MCF 10A (cell line): ENCODE measurements at regions of chr5 and their contacts with region 1.

Region 1: DNA sequence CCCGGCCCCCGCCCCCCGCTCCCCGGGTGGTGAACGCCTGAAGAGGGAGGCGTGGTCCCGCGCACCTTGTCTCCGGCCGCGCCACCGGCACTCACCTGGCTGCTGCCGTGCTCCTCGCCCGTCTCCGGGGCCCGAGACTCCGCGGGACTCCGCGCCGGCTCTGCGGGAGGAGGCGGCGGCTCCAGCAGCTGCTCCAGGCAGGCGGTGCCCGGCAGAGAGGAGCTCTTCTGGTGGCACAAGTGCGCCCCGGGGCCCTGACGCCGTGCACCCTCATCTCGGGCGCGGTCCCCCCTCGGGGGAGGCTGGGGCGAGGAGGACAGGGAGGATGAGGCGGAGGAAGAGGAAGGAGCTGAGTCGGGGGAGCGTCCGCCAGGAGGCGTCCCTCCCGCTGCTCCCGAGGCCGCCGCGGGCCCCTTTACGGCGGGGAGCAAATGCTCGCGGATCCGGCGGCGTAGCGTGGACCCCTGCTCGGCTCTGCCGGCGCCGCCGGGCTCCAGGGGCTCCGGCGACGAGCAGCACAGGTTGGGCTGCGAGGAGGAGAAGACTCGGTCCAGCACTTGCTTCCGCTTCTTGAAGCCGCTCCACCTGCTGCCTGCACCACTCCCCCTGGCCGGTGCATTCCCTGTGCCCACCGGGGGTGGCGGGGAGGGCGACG is 1.0 kb downstream of the MCTP1 start:
- DNase-seq: peak; percentile 47
- H3K4me3 Mint-ChIP-seq: peak overlapping the region; percentile 69
- H3K27ac Mint-ChIP-seq: no peak overlapping the region
- H3K4me1 Mint-ChIP-seq: no peaks in the 10 kb centered on the region
- H3K27me3 Mint-ChIP-seq: peaks cover 64% of the 10 kb centered on the region
- CTCF ChIP-seq: peak; percentile 60

Region 2: GRCh38 chr5:95460662-95461061 is 176.8 kb after region 1 on chr5:
- CTCF ChIA-PET with region 1: interaction called, 3 read pairs
- POLR2A ChIA-PET with region 1: no interaction called
- intact Hi-C with region 1: loop called (anchors 10 kb)
- DNase-seq: no peak
- H3K4me3 Mint-ChIP-seq: no peak overlapping the region
- H3K27ac Mint-ChIP-seq: no peak overlapping the region
- H3K4me1 Mint-ChIP-seq: no peaks in the 10 kb centered on the region
- H3K27me3 Mint-ChIP-seq: no peaks in the 10 kb centered on the region
- CTCF ChIP-seq: no peak

Region 3: DNA sequence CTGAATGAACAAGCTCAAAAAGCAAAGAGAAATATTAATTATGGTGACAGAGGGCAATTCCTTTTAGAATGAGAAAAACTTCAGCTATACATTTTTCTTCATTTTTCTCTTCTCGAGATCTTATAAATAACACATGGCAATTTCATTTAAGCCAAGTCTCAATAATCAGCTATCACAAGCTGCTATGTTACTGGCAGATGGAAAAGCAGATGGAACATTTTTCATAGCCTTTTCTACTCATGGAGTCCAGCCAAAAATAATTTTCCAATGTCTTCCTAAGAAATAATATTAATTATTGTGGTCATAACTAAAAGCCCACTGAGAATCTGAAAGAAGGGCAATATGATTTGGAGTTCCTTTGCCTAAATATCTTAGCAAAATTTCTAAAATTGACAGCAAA is 235.3 kb after region 1 on chr5:
- CTCF ChIA-PET with region 1: interaction called, 3 read pairs
- POLR2A ChIA-PET with region 1: no interaction called
- intact Hi-C with region 1: loop called (anchors 10 kb)
- DNase-seq: no peak
- H3K4me3 Mint-ChIP-seq: no peak overlapping the region
- H3K27ac Mint-ChIP-seq: no peak overlapping the region
- H3K4me1 Mint-ChIP-seq: no peaks in the 10 kb centered on the region
- H3K27me3 Mint-ChIP-seq: no peaks in the 10 kb centered on the region
- CTCF ChIP-seq: no peak